H1 (cell line): ENCODE measurements at regions of chr14 and their contacts with region 1.

Region 1: GRCh38 chr14:64960762-64961278 is 11.3 kb downstream of the RAB15 start:
- DNase-seq: peak in 1 of 2 experiments; percentile 78
- H3K4me3 ChIP-seq: no peak overlapping the region
- H3K27ac ChIP-seq: no peak overlapping the region
- H3K4me1 ChIP-seq: peaks cover 8 to 19% (median 13%) of the 10 kb centered on the region in 4 experiments
- H3K27me3 ChIP-seq: no peaks in the 10 kb centered on the region
- CTCF ChIP-seq: peak; percentile 48 to 67 (median 63)
- EP300 ChIP-seq: peak in 1 of 2 experiments; percentile 59; a peak in 1 of 3 replicates
- POLR2A ChIP-seq: no peak
- RAD21 ChIP-seq: peak; percentile 31 to 60

Region 2: GRCh38 chr14:64778104-64778754 is 182.6 kb before region 1 on chr14:
- CTCF ChIA-PET with region 1: no interaction called
- POLR2A ChIA-PET with region 1: no interaction called
- DNase-seq: no peak
- H3K4me3 ChIP-seq: no peak overlapping the region
- H3K27ac ChIP-seq: no peak overlapping the region
- H3K4me1 ChIP-seq: no peaks in the 10 kb centered on the region
- H3K27me3 ChIP-seq: no peaks in the 10 kb centered on the region
- CTCF ChIP-seq: no peak
- EP300 ChIP-seq: no peak
- POLR2A ChIP-seq: no peak
- RAD21 ChIP-seq: no peak

Region 3: DNA sequence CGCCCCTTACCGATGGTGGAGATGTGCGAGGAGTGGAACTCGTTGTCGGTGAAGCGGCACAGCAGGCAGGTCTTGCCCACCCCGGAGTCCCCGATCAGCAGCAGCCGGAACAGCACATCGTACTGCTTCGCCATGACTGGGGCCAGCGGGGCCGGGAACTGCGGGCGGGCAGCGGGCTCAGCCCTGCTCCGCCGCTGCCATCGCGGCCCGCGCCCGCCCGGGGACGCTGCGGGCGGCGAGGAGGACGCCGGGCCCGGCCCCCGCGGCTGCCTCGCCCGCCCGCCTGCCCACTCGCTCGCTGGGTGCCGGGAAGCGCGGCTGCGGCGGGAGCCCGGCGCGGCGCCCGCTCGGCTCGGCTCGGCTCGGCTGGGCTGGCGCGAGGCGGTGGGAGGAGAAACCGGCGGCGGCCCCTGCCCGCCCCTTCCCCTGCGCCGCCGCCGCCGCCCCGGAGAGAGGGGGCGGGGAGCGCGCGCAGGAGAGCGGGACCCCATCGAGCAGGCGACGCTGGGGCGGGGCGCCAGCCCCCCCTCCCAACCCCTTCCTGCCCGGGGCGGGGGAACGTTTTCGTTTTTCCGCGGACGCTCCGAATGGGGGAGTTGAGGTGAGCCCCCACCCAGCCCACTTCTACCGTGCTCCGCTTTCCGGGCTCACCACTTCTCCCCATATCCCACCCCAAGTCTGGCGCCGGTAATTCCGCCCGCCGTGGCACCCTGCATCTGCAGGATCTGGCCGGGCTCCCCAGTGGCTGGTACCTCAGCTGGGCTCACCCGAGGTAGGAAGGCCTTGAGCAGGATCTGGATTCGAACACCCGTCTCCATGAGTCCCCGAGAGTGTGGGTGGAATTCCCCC is 11.3 kb after region 1 on chr14 and contains the start of gene RAB15:
- CTCF ChIA-PET with region 1: interaction called, 45 read pairs
- POLR2A ChIA-PET with region 1: interaction called, 8 read pairs
- DNase-seq: no peak
- H3K4me3 ChIP-seq: peak within 1 kb of the TSS; percentile 60 to 94 (median 72)
- H3K27ac ChIP-seq: no peak within 1 kb of the TSS
- H3K4me1 ChIP-seq: peaks cover 5 to 36% (median 18%) of the 10 kb centered on the region in 4 experiments
- H3K27me3 ChIP-seq: peaks cover 0 to 21% (median 8%) of the 10 kb centered on the region in 4 experiments; a peak in 4 of 7 replicates
- CTCF ChIP-seq: no peak
- EP300 ChIP-seq: no peak
- POLR2A ChIP-seq: no peak
- RAD21 ChIP-seq: no peak
- total RNA-seq, gene RAB15: 58.1 and 59.2 TPM in 2 replicates

Region 4: DNA sequence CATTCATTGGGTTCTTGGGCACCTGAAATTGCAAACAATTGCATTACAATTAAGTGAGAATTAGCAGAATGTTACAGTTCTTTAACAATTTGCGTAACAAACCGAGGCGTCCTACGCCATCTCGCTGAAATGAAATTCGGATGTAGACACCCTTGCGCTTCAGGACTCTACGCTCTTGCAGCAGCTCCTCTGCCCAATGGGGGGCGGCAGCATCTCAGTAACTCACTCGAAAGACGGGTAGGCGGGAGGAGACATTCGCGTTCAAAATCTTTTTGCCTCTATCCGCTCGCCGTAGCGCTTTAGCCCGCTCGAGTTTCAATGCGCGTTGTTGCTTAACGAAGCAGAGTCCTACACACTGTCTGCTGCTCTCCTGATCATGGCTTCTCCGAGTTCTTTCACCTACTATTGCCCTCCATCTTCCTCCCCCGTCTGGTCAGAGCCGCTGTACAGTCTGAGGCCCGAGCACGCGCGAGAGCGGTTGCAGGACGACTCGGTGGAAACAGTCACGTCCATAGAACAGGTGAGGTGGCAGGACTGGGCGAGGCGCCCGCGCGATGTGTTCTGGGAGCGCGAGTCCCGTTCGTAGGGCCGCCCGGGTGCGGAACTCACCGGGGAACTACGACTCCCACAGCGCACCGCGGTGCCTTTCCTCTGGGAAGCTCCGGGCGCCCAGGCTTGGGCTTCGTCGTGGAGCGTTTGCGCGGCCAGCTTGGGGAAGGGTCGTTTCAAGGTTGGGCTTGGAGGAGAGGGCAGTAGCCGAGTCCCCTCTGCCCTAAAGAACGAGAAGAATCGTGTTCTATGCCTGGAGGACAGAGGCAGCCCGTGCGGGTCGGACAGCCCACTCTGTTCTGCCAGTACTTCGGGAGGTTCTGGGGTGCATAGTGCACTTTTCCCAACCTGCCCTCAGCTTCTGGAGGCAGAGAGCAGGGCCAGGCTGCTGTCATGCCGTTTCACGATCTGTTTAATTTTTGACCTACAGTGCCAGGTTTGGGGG is 26.1 kb after region 1 on chr14 and contains the start of gene FNTB:
- CTCF ChIA-PET with region 1: interaction called, 15 read pairs
- POLR2A ChIA-PET with region 1: interaction called, 6 read pairs
- DNase-seq: peak; percentile 90 to 95
- H3K4me3 ChIP-seq: peak within 1 kb of the TSS; percentile 55 to 75 (median 74)
- H3K27ac ChIP-seq: peak within 1 kb of the TSS; percentile 42; the same call in 1 of the 2 replicates
- H3K4me1 ChIP-seq: peaks cover 0 to 2% (median 0%) of the 10 kb centered on the region in 4 experiments; a peak in 2 of 7 replicates
- H3K27me3 ChIP-seq: no peaks in the 10 kb centered on the region; a peak in 2 of 7 replicates
- CTCF ChIP-seq: peak; percentile 77 to 93 (median 85)
- EP300 ChIP-seq: no peak
- POLR2A ChIP-seq: peak in 1 of 2 experiments; percentile 69; a peak in 2 of 3 replicates
- RAD21 ChIP-seq: peak; percentile 84 to 87
- total RNA-seq, gene FNTB: 13.8 and 16.0 TPM in 2 replicates